Sigmoid colon (tissue), 7 donors: ENCODE measurements at regions of chr7 and their contacts with region 1.

Region 1: GRCh38 chr7:100478966-100479665 is at the start of gene TSC22D4:
- DNase-seq: peak; percentile 99
- H3K4me3 ChIP-seq: peak within 1 kb of the TSS; percentile 64 to 100 (median 90)
- H3K27ac ChIP-seq: peak within 1 kb of the TSS; percentile 93 to 96 (median 94)
- H3K4me1 ChIP-seq: peaks cover 0 to 57% (median 53%) of the 10 kb centered on the region in 4 donors
- H3K27me3 ChIP-seq: no peaks in the 10 kb centered on the region
- CTCF ChIP-seq: no peak
- EP300 ChIP-seq: peak in 1 of 4 donors; percentile 53
- POLR2A ChIP-seq: peak; percentile 92 to 94
- total RNA-seq, gene TSC22D4: 24.4 to 31.6 (median 28.5) TPM

Region 2: GRCh38 chr7:98878365-98879165 is 1600.6 kb before region 1 on chr7 and contains the start of gene TRRAP:
- intact Hi-C with region 1: no loop called
- DNase-seq: peak; percentile 80
- H3K4me3 ChIP-seq: peak within 1 kb of the TSS; percentile 77 to 94 (median 83)
- H3K27ac ChIP-seq: peak within 1 kb of the TSS; percentile 91 to 97 (median 93)
- H3K4me1 ChIP-seq: peaks cover 0 to 19% (median 14%) of the 10 kb centered on the region in 4 donors
- H3K27me3 ChIP-seq: peaks cover 0 to 8% (median 3%) of the 10 kb centered on the region in 3 donors
- CTCF ChIP-seq: peak; percentile 80 to 99 (median 90)
- EP300 ChIP-seq: no peak
- POLR2A ChIP-seq: no peak
- total RNA-seq, gene TRRAP: 18.9 to 35.5 (median 24.0) TPM

Region 3: GRCh38 chr7:100446040-100446439 is 33.1 kb before region 1 on chr7:
- intact Hi-C with region 1: loop called (anchors 1 kb)
- DNase-seq: no peak
- H3K4me3 ChIP-seq: no peak overlapping the region
- H3K27ac ChIP-seq: no peak overlapping the region
- H3K4me1 ChIP-seq: peaks cover 0 to 7% (median 2%) of the 10 kb centered on the region in 4 donors
- H3K27me3 ChIP-seq: no peaks in the 10 kb centered on the region
- CTCF ChIP-seq: no peak
- EP300 ChIP-seq: no peak
- POLR2A ChIP-seq: no peak

Region 4: GRCh38 chr7:100539436-100540006 is 60.4 kb after region 1 on chr7:
- intact Hi-C with region 1: loop called (anchors 2 kb)
- DNase-seq: no peak
- H3K4me3 ChIP-seq: peak overlapping the region; percentile 63 to 91 (median 80)
- H3K27ac ChIP-seq: peak overlapping the region; percentile 78 to 89 (median 83)
- H3K4me1 ChIP-seq: peaks cover 0 to 34% (median 31%) of the 10 kb centered on the region in 4 donors
- H3K27me3 ChIP-seq: no peaks in the 10 kb centered on the region
- CTCF ChIP-seq: no peak
- EP300 ChIP-seq: no peak
- POLR2A ChIP-seq: no peak

Region 5: GRCh38 chr7:100563809-100564400 is 84.8 kb after region 1 on chr7:
- intact Hi-C with region 1: loop called (anchors 2 kb)
- DNase-seq: peak; percentile 89
- H3K4me3 ChIP-seq: no peak overlapping the region
- H3K27ac ChIP-seq: no peak overlapping the region
- H3K4me1 ChIP-seq: peaks cover 0 to 5% (median 0%) of the 10 kb centered on the region in 4 donors
- H3K27me3 ChIP-seq: no peaks in the 10 kb centered on the region
- CTCF ChIP-seq: peak; percentile 84 to 98 (median 93)
- EP300 ChIP-seq: no peak
- POLR2A ChIP-seq: no peak

Region 6: DNA sequence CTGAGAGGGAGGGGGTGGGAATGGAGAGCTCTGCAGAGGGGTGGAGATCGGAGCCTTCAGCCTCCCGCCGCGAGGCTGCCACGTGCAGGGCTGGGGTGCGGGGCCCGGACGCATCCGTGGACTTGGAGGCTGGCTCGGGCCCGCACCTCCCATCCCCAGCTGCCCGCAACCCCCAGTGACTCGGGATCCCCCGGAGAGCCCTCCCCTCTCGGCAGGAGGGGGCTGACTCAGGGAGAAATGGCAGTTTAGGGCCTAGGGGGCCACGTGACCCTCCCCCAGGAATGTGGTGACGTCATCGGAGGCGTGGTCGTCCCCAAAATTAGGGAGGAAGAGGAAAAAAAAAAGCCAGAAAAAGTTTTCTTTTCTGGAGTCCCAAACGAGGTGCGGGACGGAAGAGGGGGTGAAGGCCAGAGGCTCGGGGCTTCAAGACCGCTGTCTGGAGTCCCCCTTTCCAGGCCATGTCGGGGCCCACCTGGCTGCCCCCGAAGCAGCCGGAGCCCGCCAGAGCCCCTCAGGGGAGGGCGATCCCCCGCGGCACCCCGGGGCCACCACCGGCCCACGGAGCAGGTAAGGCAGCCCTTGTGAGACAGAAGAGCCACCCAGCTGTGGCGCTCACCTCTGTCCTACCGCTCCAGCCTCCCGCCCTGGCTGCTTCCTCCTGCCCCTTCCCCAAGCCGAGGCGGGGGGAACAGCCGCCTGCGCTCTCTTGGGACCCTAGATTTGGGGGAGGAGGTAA is 388.1 kb after region 1 on chr7 and contains the start of gene TRIP6:
- intact Hi-C with region 1: loop called (anchors 10 kb)
- DNase-seq: peak; percentile 96
- H3K4me3 ChIP-seq: peak within 1 kb of the TSS; percentile 73 to 89 (median 82)
- H3K27ac ChIP-seq: peak within 1 kb of the TSS; percentile 95 to 97 (median 96)
- H3K4me1 ChIP-seq: peaks cover 0 to 38% (median 34%) of the 10 kb centered on the region in 4 donors
- H3K27me3 ChIP-seq: no peaks in the 10 kb centered on the region
- CTCF ChIP-seq: no peak
- EP300 ChIP-seq: peak in 1 of 4 donors; percentile 59
- POLR2A ChIP-seq: peak in 1 of 2 donors; percentile 24
- total RNA-seq, gene TRIP6: 37.8 to 79.7 (median 51.1) TPM